ENCODE measurements at regions of chr5 and their contacts with region 1.

Region 1: GRCh38 chr5:42950440-42951292 is 89.5 kb downstream of the ANXA2R start:
- DNase-seq: no peak
- ATAC-seq: peak; percentile 48
- H3K4me3 Mint-ChIP-seq: peak overlapping the region; percentile 94
- H3K27ac Mint-ChIP-seq: peak overlapping the region; percentile 98
- H3K4me1 Mint-ChIP-seq: peaks cover 33% of the 10 kb centered on the region
- H3K27me3 Mint-ChIP-seq: no peaks in the 10 kb centered on the region
- CTCF ChIP-seq: no peak

Region 2: DNA sequence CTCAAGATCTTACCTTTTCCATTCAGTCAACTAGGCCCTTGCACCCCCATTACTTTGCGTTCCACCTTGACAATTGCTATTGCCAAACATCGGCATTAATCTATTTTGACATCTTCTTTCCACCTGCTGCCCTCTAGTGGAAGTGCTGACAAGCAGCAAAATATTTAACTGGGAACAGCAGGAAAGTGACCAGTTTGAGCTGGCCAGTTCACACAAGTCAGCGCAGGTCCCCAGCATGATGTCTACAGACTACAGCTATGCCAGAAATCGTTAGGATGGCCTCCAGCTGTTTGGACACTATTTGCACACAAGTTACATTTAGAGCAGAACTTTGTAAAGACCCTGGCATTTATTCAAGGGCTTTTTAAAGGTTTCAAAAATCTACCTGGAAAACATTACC is 367.3 kb before region 1 on chr5:
- CTCF ChIA-PET with region 1: no interaction called
- POLR2A ChIA-PET with region 1: no interaction called
- intact Hi-C with region 1: no loop called
- DNase-seq: no peak
- ATAC-seq: no peak
- H3K4me3 Mint-ChIP-seq: no peak overlapping the region
- H3K27ac Mint-ChIP-seq: no peak overlapping the region
- H3K4me1 Mint-ChIP-seq: peaks cover 3% of the 10 kb centered on the region
- H3K27me3 Mint-ChIP-seq: peaks cover 8% of the 10 kb centered on the region
- CTCF ChIP-seq: no peak

Region 3: GRCh38 chr5:42595597-42595996 is 355.1 kb before region 1 on chr5:
- CTCF ChIA-PET with region 1: no interaction called
- POLR2A ChIA-PET with region 1: no interaction called
- intact Hi-C with region 1: no loop called
- DNase-seq: no peak
- ATAC-seq: no peak
- H3K4me3 Mint-ChIP-seq: no peak overlapping the region
- H3K27ac Mint-ChIP-seq: no peak overlapping the region
- H3K4me1 Mint-ChIP-seq: peaks cover 6% of the 10 kb centered on the region
- H3K27me3 Mint-ChIP-seq: peaks cover 2% of the 10 kb centered on the region
- CTCF ChIP-seq: no peak

Region 4: GRCh38 chr5:42994246-42995151 is 43.8 kb after region 1 on chr5:
- CTCF ChIA-PET with region 1: interaction called, 22 read pairs
- POLR2A ChIA-PET with region 1: interaction called, 248 read pairs
- intact Hi-C with region 1: loop called (anchors 1 kb)
- DNase-seq: peak; percentile 72
- ATAC-seq: peak; percentile 66
- H3K4me3 Mint-ChIP-seq: peak overlapping the region; percentile 99
- H3K27ac Mint-ChIP-seq: peak overlapping the region; percentile 100
- H3K4me1 Mint-ChIP-seq: peaks cover 34% of the 10 kb centered on the region
- H3K27me3 Mint-ChIP-seq: peaks cover under 1% of the 10 kb centered on the region
- CTCF ChIP-seq: peak; percentile 89

Region 5: DNA sequence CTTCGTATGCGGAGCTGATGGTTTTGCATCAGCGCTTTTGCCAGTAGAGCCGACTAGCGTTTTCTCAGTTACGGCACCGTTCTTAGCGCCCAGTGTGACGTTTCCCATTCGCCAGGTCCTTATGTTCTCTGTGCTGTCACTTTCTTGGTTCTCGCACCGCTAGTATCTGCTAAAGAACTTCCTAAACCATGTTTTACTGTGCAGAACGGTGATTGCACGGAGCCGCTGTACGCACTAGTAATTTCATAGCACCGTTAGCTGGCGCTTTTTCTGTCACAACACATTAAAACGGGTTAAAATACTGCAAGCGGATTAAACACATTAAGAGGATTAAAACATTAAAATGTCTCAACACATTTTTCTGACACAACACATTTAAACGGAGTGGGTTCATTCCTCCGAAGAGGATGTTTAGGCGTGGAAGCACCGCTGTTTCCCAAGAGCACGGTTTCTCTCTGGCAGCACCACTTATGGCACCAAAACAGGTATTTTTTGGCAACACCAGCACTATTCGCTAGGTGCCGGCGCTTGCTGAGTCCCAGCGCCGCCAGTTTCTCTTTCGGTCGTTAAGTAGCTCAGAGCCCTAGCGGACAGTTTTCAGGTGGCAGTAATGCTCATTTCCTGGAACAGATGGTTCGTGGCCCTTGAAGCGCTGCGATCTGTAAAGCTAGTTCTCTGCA is 69.1 kb after region 1 on chr5:
- CTCF ChIA-PET with region 1: interaction called, 6 read pairs
- POLR2A ChIA-PET with region 1: interaction called, 144 read pairs
- intact Hi-C with region 1: loop called (anchors 1 kb)
- DNase-seq: peak; percentile 61
- ATAC-seq: peak; percentile 64
- H3K4me3 Mint-ChIP-seq: peak overlapping the region; percentile 97
- H3K27ac Mint-ChIP-seq: peak overlapping the region; percentile 100
- H3K4me1 Mint-ChIP-seq: peaks cover 39% of the 10 kb centered on the region
- H3K27me3 Mint-ChIP-seq: no peaks in the 10 kb centered on the region
- CTCF ChIP-seq: no peak

Region 6: GRCh38 chr5:43105369-43106289 is 155.0 kb after region 1 on chr5:
- CTCF ChIA-PET with region 1: interaction called, 8 read pairs
- POLR2A ChIA-PET with region 1: no interaction called
- intact Hi-C with region 1: loop called (anchors 1 kb)
- DNase-seq: peak; percentile 73
- ATAC-seq: peak; percentile 99
- H3K4me3 Mint-ChIP-seq: peak overlapping the region; percentile 83
- H3K27ac Mint-ChIP-seq: peak overlapping the region; percentile 80
- H3K4me1 Mint-ChIP-seq: peaks cover 7% of the 10 kb centered on the region
- H3K27me3 Mint-ChIP-seq: peaks cover 2% of the 10 kb centered on the region
- CTCF ChIP-seq: peak; percentile 100

Region 7: GRCh38 chr5:43556857-43557542 is 606.3 kb after region 1 on chr5 and contains the start of gene PAIP1:
- CTCF ChIA-PET with region 1: no interaction called
- POLR2A ChIA-PET with region 1: interaction called, 3 read pairs
- intact Hi-C with region 1: loop called (anchors 2 kb)
- DNase-seq: peak; percentile 90
- ATAC-seq: peak; percentile 93
- H3K4me3 Mint-ChIP-seq: peak within 1 kb of the TSS; percentile 89
- H3K27ac Mint-ChIP-seq: peak within 1 kb of the TSS; percentile 94
- H3K4me1 Mint-ChIP-seq: peaks cover 21% of the 10 kb centered on the region
- H3K27me3 Mint-ChIP-seq: no peaks in the 10 kb centered on the region
- CTCF ChIP-seq: peak; percentile 41
- total RNA-seq, gene PAIP1: 35.1 and 38.3 TPM in 2 replicates

Region 8: GRCh38 chr5:43680286-43680685 is 729.6 kb after region 1 on chr5:
- CTCF ChIA-PET with region 1: no interaction called
- POLR2A ChIA-PET with region 1: no interaction called
- intact Hi-C with region 1: no loop called
- DNase-seq: no peak
- ATAC-seq: no peak
- H3K4me3 Mint-ChIP-seq: no peak overlapping the region
- H3K27ac Mint-ChIP-seq: no peak overlapping the region
- H3K4me1 Mint-ChIP-seq: no peaks in the 10 kb centered on the region
- H3K27me3 Mint-ChIP-seq: no peaks in the 10 kb centered on the region
- CTCF ChIP-seq: no peak

Region 9: GRCh38 chr5:44875661-44876605 is 1925.3 kb after region 1 on chr5:
- CTCF ChIA-PET with region 1: no interaction called
- POLR2A ChIA-PET with region 1: no interaction called
- intact Hi-C with region 1: no loop called
- DNase-seq: no peak
- ATAC-seq: peak; percentile 87
- H3K4me3 Mint-ChIP-seq: peak overlapping the region; percentile 65
- H3K27ac Mint-ChIP-seq: peak overlapping the region; percentile 90
- H3K4me1 Mint-ChIP-seq: peaks cover 10% of the 10 kb centered on the region
- H3K27me3 Mint-ChIP-seq: no peaks in the 10 kb centered on the region
- CTCF ChIP-seq: no peak